KBM-7 (cell line): ENCODE measurements at regions of chr12 and their contacts with region 1.

Region 1: DNA sequence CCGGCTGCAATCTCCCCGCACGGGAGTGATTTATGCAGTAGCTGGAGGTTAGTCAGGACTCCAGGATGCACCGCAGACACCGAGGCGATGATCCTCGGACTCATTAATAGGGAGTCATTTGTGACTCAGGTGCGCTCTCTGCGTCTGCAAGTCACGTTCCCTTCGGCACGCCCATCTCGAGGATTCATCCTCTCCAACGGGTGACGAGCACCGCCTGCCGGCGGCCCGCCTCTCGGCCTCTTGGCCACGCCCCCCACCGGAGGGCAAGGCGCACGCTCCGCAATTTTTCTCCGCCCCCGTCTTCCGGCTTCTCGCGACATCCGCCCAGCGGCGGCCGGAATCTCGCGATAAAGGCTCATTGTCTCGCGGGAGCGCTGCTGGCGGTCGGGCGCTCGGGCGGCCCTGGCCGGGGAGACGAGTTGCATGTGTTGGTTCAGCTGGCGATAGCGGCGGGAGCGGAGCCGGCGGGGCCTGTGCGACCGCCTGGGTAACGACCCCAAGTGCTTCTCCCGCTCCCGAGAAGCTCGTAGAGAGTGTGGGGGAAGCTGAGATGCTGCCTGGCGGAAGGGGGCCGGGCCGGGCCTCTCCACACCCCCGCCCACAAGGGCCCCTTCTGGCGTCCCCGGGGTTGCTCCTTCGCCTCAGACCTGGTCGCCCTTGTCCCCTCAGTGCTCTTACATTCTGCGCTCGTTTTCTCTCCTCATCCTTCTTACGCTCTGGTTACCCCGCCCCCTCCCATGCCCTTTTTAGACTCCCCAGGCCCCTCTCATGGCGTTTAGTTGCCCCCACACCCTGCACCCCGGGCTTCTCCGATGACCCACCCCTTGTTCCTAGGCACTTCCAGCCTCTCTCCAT is at the start of gene DENR:
- DNase-seq: peak; percentile 98

Region 2: DNA sequence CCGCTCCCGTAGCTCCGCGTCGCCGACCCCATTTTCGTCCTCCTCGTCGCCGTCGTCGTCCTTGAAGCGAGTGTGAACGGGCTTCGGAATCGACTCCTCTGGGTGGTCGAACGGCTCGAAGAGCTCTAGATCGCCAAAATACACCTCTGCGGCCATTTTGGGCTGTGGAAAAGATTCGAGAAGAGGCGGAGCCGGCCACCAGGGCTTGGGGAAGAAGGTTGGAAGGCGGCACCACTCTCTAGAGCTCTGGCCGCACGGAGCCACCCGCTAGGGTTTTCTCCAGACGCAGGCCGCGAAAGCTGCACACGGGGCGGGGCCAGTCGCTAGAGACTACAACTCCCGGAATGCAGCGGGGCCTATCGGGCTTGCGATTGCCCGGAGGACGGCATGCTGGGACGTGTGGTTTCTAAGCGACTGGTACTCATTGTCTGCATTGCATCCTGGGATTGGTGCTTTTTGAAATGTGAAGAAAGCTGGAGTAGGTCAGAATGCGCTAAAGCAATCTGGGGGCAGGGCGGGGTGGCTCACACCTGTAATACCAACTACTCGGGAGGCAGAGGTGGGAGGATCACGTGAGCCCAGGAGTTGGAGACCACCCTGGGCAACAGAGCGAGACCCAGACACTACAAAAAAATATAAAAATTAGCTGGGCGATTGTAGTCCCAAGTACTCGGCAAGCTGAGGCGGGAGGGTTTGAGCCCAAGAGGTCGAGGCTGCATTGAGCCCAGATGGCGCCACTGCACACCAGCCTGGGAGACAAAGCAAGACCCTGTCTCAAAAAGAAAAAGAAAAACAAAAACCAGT is 251.8 kb before region 1 on chr12 and contains the start of gene ZCCHC8:
- in situ Hi-C with region 1: loop called (anchors 25 kb)
- DNase-seq: peak; percentile 99